CD4-positive, alpha-beta T cell (primary cell): ENCODE measurements at regions of chr14 and their contacts with region 1.

Region 1: GRCh38 chr14:94080471-94081289 is at the start of gene DDX24:
- DNase-seq: peak; percentile 93 to 99 (median 96)
- ATAC-seq: peak; percentile 92
- H3K4me3 ChIP-seq: peak within 1 kb of the TSS; percentile 98
- H3K4me3 Mint-ChIP-seq: peak within 1 kb of the TSS; percentile 99
- H3K27ac ChIP-seq: peak within 1 kb of the TSS; percentile 93
- H3K27ac Mint-ChIP-seq: peak within 1 kb of the TSS; percentile 97
- H3K4me1 ChIP-seq: peaks cover 31% of the 10 kb centered on the region
- H3K4me1 Mint-ChIP-seq: peaks cover 63% of the 10 kb centered on the region
- H3K27me3 ChIP-seq: no peaks in the 10 kb centered on the region
- H3K27me3 Mint-ChIP-seq: no peaks in the 10 kb centered on the region
- CTCF ChIP-seq: no peak
- total RNA-seq, gene DDX24: 678 to 711 TPM

Region 2: DNA sequence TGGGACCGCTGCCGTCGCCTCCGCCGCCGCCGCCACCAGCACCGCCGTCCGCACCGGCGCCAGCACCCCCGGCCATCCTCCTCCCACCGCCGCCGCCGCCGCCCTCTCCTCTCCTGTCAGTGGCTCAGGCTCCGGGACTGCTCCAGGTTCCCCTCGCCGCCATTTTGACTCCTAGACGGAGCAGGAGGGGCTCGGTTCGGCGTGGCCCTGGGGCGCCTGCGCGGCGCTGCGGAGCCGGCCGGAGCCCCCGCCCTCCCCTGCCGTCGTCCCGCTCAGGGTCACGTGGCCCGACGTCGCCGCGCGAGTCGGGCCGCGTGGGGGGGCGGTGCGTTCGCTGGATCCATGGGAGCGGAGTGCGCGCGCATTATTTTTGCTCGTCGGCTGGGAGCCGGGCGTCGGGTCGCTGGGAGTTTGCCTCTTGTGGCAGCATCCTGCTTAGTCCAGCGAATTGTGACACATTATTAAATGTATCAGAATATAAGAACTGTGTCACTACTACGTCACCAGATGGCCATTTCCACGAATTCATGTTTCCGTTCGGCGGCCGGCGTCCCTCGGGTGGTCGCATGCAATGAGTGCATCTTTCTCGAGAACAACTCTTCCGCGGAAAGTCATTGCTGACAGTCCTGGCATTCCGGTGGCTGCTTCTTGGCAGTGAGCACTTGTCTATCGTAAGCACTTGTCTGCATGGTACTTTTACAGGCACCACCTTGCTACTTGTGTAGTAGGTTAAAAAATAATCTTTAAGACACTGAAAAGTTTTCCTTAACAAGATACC is 747.6 kb before region 1 on chr14 and contains the start of gene BTBD7:
- CTCF ChIA-PET with region 1: no interaction called
- POLR2A ChIA-PET with region 1: no interaction called
- intact Hi-C with region 1: loop called in 1 of 2 experiments (anchors 5 kb)
- DNase-seq: peak; percentile 88 to 99 (median 92)
- ATAC-seq: peak; percentile 94
- H3K4me3 ChIP-seq: peak within 1 kb of the TSS; percentile 80
- H3K4me3 Mint-ChIP-seq: peak within 1 kb of the TSS; percentile 97
- H3K27ac ChIP-seq: peak within 1 kb of the TSS; percentile 52 to 73
- H3K27ac Mint-ChIP-seq: peak within 1 kb of the TSS; percentile 92
- H3K4me1 ChIP-seq: peaks cover 20% of the 10 kb centered on the region
- H3K4me1 Mint-ChIP-seq: peaks cover 58% of the 10 kb centered on the region
- H3K27me3 ChIP-seq: no peaks in the 10 kb centered on the region
- H3K27me3 Mint-ChIP-seq: no peaks in the 10 kb centered on the region
- CTCF ChIP-seq: no peak
- total RNA-seq, gene BTBD7: 12.5 to 12.6 TPM

Region 3: DNA sequence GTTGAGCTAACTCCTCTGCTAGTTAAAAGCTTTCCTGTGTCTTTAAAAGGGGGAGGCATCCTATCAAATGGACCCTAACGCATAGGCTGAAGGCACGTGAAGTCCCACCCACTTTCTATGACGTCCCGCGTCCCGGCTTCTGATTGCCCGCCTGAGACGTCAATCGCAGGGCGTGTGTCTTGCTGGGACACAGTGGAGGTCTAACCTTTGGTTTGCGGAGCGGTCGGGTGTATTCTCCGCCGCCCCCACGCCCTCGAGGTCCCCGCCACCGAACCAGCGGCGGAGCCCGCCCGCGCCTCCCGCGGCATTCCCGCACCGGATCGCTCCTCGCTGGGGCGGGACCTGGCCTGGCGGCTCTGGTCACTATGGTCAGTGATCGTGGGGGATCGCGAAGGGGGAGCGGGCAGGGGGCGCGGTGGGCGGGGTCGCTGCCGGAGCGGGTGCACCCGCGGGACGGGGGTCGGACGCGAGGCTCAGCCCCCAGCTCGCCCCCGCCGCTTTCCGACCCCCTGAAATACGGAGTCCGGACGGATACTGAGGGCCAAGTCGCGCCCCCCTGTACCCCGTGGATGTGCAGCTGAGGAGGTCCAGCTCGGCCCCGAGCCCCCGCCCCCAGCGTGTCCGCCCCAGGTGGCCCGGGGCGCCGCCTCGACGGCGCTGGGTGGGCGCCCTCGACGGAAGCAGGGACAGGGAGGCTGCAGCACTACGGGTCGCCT is 54.3 kb before region 1 on chr14 and contains the start of gene OTUB2:
- CTCF ChIA-PET with region 1: no interaction called
- POLR2A ChIA-PET with region 1: interaction called, 12 read pairs
- intact Hi-C with region 1: loop called in 1 of 2 experiments (anchors 5 kb)
- DNase-seq: peak; percentile 92 to 98 (median 96)
- ATAC-seq: peak; percentile 100
- H3K4me3 ChIP-seq: peak within 1 kb of the TSS; percentile 31
- H3K4me3 Mint-ChIP-seq: peak within 1 kb of the TSS; percentile 81
- H3K27ac ChIP-seq: no peak within 1 kb of the TSS
- H3K27ac Mint-ChIP-seq: peak within 1 kb of the TSS; percentile 10
- H3K4me1 ChIP-seq: peaks cover 53% of the 10 kb centered on the region
- H3K4me1 Mint-ChIP-seq: peaks cover 32% of the 10 kb centered on the region
- H3K27me3 ChIP-seq: no peaks in the 10 kb centered on the region
- H3K27me3 Mint-ChIP-seq: no peaks in the 10 kb centered on the region
- CTCF ChIP-seq: no peak
- total RNA-seq, gene OTUB2: not detected

Region 4: DNA sequence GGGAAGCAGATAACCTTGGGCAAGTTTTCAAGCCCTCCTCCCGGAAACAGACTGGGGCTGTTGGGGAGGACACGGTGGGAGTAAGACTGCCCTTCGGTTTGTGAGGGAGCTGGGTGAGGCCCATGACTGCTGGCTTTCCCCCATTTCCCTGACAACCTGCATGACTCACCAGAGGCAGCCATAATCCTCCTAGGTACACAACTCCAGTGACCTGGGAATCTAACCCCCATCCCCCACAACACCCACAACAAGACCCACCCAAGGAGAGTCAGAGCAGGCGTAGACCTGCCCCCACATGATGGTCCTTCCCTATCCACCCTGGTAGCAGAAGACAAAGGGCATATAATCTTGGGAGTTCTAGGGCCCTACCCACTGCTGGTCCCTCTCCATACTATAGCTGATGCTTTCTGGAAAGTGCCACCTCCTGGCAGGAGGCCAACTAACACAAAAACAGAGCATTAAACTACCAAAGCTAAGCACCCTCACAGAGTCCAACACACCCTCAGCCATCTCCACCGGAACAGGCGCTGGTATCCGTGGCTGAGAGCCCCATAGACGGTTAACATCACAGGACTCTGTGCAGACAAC is 14.5 kb before region 1 on chr14:
- CTCF ChIA-PET with region 1: no interaction called
- POLR2A ChIA-PET with region 1: interaction called, 18 read pairs
- intact Hi-C with region 1: no loop called
- DNase-seq: no peak
- ATAC-seq: no peak
- H3K4me3 ChIP-seq: no peak overlapping the region
- H3K4me3 Mint-ChIP-seq: peak overlapping the region; percentile 23
- H3K27ac ChIP-seq: no peak overlapping the region
- H3K27ac Mint-ChIP-seq: no peak overlapping the region
- H3K4me1 ChIP-seq: peaks cover 27% of the 10 kb centered on the region
- H3K4me1 Mint-ChIP-seq: peaks cover 95% of the 10 kb centered on the region
- H3K27me3 ChIP-seq: no peaks in the 10 kb centered on the region
- H3K27me3 Mint-ChIP-seq: no peaks in the 10 kb centered on the region
- CTCF ChIP-seq: no peak

Region 5: GRCh38 chr14:94173885-94174603 is 93.4 kb after region 1 on chr14 and contains the start of gene PPP4R4:
- CTCF ChIA-PET with region 1: interaction called, 3 read pairs
- POLR2A ChIA-PET with region 1: interaction called, 14 read pairs
- intact Hi-C with region 1: loop called in 1 of 2 experiments (anchors 2 kb)
- DNase-seq: peak; percentile 75 to 95 (median 88)
- ATAC-seq: peak; percentile 90
- H3K4me3 ChIP-seq: peak within 1 kb of the TSS; percentile 79
- H3K4me3 Mint-ChIP-seq: peak within 1 kb of the TSS; percentile 88
- H3K27ac ChIP-seq: no peak within 1 kb of the TSS
- H3K27ac Mint-ChIP-seq: peak within 1 kb of the TSS; percentile 11
- H3K4me1 ChIP-seq: peaks cover 23% of the 10 kb centered on the region
- H3K4me1 Mint-ChIP-seq: peaks cover 30% of the 10 kb centered on the region
- H3K27me3 ChIP-seq: peaks cover 4 to 7% of the 10 kb centered on the region in 2 experiments
- H3K27me3 Mint-ChIP-seq: peaks cover 7% of the 10 kb centered on the region
- CTCF ChIP-seq: no peak
- total RNA-seq, gene PPP4R4: 3.5 to 4.3 TPM